Activated CD4-positive, alpha-beta memory T cell treated with anti-CD3 and anti-CD28 coated beads, Interleukin-2, amount 10 ng/mL, durations not matched to agents 7 days and 5 days (primary cell): ENCODE measurements at regions of chr20 and their contacts with region 1.

Region 1: GRCh38 chr20:57493091-57493615 is 31.8 kb downstream of the CTCFL start:
- DNase-seq: no peak
- H3K4me3 Mint-ChIP-seq: no peak overlapping the region
- H3K27ac Mint-ChIP-seq: no peak overlapping the region
- H3K4me1 Mint-ChIP-seq: peaks cover 7% of the 10 kb centered on the region
- H3K27me3 Mint-ChIP-seq: peaks cover 48% of the 10 kb centered on the region

Region 2: DNA sequence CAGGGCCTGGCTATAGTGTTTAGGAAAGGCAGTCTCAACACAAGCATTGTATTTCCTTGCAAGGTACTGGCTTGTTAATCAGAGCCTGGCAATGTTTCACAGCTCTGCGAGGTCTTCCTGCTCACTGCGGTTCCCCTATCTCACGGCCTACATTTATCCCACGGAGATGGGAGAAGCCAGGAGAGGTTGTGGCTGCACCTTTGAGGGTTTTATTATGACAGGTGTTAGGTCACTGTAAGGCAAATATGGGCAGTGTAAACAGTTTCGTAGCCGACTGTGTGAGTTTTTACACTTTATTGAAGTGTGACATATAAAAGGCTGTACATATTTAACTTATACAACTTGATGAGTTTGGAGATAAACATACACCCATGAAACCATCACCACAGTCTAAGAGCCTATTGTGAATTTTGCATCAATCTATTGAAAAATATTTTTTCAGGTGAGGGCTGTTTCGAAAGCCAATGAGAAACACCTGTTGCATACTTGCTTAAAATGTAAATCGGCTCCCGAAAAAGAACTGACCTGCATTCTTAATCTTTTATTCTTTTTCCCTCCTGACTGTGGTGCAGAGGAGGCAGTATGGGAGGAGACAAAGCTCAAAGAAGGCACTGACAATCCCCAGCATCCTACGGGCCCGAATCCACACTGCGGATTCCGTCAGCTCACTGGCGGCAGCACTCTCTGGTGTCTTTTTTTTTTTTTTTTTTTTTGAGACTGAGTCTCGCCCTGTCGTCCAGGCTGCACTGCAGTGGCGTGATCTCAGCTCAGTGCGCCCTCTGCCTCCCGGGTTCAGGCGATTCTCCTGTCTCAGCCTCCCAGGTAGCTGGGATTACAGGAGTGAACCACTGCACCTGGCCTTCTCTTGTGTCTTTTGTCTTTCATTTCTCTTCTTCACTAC is 109.5 kb before region 1 on chr20:
- CTCF ChIA-PET with region 1: interaction called, 23 read pairs
- POLR2A ChIA-PET with region 1: no interaction called
- DNase-seq: no peak
- H3K4me3 Mint-ChIP-seq: no peak overlapping the region
- H3K27ac Mint-ChIP-seq: no peak overlapping the region
- H3K4me1 Mint-ChIP-seq: peaks cover 42% of the 10 kb centered on the region
- H3K27me3 Mint-ChIP-seq: no peaks in the 10 kb centered on the region

Region 3: DNA sequence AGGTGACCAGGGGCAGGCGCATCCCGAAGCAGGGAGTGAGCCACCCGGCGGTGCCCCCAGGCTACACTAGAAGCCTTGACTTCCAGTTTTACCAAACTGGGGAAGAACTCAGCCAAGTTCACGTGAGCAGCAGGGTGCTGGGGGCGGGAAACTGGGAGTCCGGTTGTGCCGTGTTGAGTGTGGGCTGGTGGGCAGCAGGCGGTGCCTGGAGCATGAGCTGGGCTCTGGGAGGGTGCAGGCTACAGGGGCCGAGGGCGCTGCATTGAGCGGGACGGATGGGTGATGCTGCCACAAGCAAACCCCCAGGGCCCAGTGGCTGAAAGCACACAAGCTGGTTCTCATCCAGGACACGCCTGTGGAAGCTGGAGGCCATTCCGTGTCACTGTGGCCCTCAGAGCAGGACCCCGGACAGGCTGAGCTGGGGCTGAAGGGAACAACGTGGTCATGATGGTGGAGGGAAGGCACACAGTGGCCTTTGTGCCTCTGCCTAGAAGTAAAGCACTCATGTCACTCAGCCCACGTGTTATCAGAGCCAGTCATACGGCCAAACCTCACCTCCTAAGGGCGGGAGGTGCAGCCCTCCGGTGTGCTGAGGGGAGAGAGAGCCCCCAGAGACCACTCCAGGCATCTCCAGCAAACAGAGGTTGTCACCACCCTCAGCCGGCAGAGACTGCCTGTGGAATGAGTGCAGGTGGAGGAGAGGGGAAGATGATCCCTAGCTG is 72.5 kb before region 1 on chr20:
- CTCF ChIA-PET with region 1: no interaction called
- POLR2A ChIA-PET with region 1: no interaction called
- DNase-seq: no peak
- H3K4me3 Mint-ChIP-seq: no peak overlapping the region
- H3K27ac Mint-ChIP-seq: no peak overlapping the region
- H3K4me1 Mint-ChIP-seq: peaks cover 16% of the 10 kb centered on the region
- H3K27me3 Mint-ChIP-seq: peaks cover 16% of the 10 kb centered on the region

Region 4: DNA sequence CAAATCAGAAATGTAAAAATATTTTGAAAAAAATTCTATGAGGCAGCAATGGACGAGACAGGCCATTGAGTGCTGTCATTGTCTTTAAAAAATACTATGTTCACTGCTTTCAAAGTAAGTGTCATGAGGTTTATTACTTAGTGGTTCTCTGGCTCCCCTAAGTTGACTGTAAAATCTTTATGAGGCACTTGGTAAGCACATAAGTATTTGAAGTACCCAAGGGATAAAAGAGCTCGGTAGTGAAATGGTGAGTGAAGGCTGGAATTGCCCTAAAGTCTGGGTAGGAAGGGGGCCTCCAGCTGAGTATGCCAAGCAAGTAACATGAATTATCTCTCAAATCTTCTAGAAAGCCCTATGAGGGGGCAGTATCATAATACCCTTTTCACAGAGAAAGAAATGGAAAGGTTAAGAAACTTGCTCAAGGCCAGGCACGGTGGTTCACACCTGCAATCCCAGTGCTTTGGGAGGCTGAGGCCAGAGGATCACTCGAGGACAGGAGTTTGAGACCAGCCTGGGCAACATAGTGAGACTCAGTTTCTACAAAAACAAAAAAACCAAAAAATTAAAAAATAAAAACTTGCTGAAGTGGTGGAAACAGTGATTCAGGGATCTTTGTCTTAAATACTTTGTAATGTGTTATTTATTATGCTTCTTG is 37.3 kb after region 1 on chr20:
- CTCF ChIA-PET with region 1: no interaction called
- POLR2A ChIA-PET with region 1: no interaction called
- DNase-seq: no peak
- H3K4me3 Mint-ChIP-seq: no peak overlapping the region
- H3K27ac Mint-ChIP-seq: no peak overlapping the region
- H3K4me1 Mint-ChIP-seq: no peaks in the 10 kb centered on the region
- H3K27me3 Mint-ChIP-seq: peaks cover 20% of the 10 kb centered on the region

Region 5: GRCh38 chr20:57573890-57574289 is 80.7 kb after region 1 on chr20:
- CTCF ChIA-PET with region 1: no interaction called
- POLR2A ChIA-PET with region 1: no interaction called
- DNase-seq: no peak
- H3K4me3 Mint-ChIP-seq: no peak overlapping the region
- H3K27ac Mint-ChIP-seq: no peak overlapping the region
- H3K4me1 Mint-ChIP-seq: no peaks in the 10 kb centered on the region
- H3K27me3 Mint-ChIP-seq: peaks cover 19% of the 10 kb centered on the region

Region 6: GRCh38 chr20:57727863-57728262 is 234.7 kb after region 1 on chr20:
- CTCF ChIA-PET with region 1: no interaction called
- POLR2A ChIA-PET with region 1: no interaction called
- DNase-seq: no peak
- H3K4me3 Mint-ChIP-seq: no peak overlapping the region
- H3K27ac Mint-ChIP-seq: no peak overlapping the region
- H3K4me1 Mint-ChIP-seq: no peaks in the 10 kb centered on the region
- H3K27me3 Mint-ChIP-seq: peaks cover 13% of the 10 kb centered on the region